Testis (tissue), 5 donors: ENCODE measurements at regions of chr2 and their contacts with region 1.

Region 1: DNA sequence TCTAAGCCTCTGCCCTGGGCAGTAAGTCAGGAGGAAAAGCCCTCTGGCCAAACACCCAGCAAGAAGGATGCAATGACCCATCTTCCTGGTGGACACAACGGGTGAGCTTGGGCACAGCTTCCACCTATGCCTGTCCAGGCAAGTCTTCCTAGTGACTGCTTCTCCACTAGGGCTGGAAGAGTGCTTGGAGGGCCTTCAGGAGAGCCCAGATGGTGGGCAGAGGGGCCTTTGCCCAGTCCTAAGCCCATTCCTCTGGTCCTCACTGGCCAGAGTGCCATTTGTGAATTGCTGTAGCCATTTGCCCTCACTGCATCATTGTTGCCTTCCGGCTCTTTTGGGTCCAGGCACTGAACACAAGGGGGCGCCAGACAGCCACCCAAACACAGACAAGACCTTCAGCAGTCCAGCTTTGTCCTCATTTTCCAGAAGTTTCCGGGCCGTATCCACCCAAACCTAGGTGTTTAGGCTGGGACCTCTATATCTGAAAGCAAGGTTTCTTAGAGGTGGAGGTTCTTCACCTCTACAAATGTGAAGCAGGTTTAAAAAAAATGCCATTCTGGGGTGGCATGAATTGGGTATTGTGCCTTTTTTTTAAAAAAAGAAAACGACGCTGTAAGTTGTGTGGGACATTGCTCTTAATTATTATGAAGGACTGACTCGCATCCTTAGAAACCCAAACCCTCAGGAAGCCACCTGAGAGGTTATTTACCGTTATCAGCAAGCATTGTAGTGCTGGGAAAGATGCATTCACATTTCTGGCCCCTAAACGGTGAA is 29.5 kb downstream of the PAX8 start:
- DNase-seq: peak; percentile 87
- H3K4me3 ChIP-seq: no peak overlapping the region
- H3K27ac ChIP-seq: no peak overlapping the region
- H3K4me1 ChIP-seq: no peaks in the 10 kb centered on the region
- H3K27me3 ChIP-seq: no peaks in the 10 kb centered on the region
- CTCF ChIP-seq: peak; percentile 75 to 90 (median 79)
- POLR2A ChIP-seq: no peak

Region 2: GRCh38 chr2:113361051-113361450 is 111.9 kb after region 1 on chr2:
- intact Hi-C with region 1: loop called (anchors 10 kb)
- DNase-seq: no peak
- H3K4me3 ChIP-seq: no peak overlapping the region
- H3K27ac ChIP-seq: no peak overlapping the region
- H3K4me1 ChIP-seq: no peaks in the 10 kb centered on the region
- H3K27me3 ChIP-seq: no peaks in the 10 kb centered on the region
- CTCF ChIP-seq: no peak
- POLR2A ChIP-seq: no peak